K562 (cell line): ENCODE measurements at regions of chr7 and their contacts with region 1.

Region 1: GRCh38 chr7:30284298-30285066 is at the start of gene ZNRF2:
- DNase-seq: peak; percentile 97 to 99 (median 98)
- ATAC-seq: peak; percentile 90
- H3K4me3 ChIP-seq: peak within 1 kb of the TSS; percentile 94
- H3K27ac ChIP-seq: peak within 1 kb of the TSS; percentile 93
- H3K4me1 ChIP-seq: peaks cover 4 to 10% of the 10 kb centered on the region in 2 experiments; a peak in 4 of 5 replicates
- H3K27me3 ChIP-seq: no peaks in the 10 kb centered on the region
- CTCF ChIP-seq: peak; percentile 53 to 92 (median 63); a peak in 5 of 6 replicates
- EP300 ChIP-seq: no peak
- POLR2A ChIP-seq: peak; percentile 56
- RAD21 ChIP-seq: peak; percentile 54 to 56
- polyA plus RNA-seq, gene ZNRF2: 1.1 to 1.2 TPM

Region 2: DNA sequence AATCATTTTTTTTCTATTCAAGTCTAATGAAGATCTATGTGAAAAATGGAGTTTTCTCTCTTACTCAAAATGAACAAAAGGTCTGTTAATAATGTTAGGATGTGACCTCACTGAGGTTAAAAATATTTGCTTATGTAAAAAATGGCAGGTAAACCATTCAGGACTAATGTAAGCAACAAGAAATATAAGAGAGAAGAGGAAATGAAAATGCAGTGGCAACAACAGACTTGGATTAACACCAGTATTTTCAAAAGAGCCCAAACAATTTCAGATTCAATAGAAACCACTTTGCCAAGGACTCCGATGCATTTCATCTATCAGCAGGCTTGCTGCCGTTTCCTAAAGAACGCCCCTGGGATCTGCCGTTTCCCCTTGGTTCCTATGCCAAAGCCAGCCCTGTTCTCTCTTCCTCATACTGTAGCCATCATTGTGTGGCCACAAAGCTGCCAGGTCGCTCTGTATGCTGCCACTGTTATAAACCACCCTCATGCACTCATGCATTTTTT is 83.3 kb before region 1 on chr7:
- CTCF ChIA-PET with region 1: no interaction called
- POLR2A ChIA-PET with region 1: no interaction called
- in situ Hi-C with region 1: no loop called
- intact Hi-C with region 1: no loop called
- DNase-seq: no peak
- ATAC-seq: no peak
- H3K4me3 ChIP-seq: no peak overlapping the region
- H3K27ac ChIP-seq: no peak overlapping the region
- H3K4me1 ChIP-seq: no peaks in the 10 kb centered on the region
- H3K27me3 ChIP-seq: peaks cover 11% of the 10 kb centered on the region in 2 experiments
- CTCF ChIP-seq: no peak
- EP300 ChIP-seq: no peak
- POLR2A ChIP-seq: no peak
- RAD21 ChIP-seq: no peak

Region 3: GRCh38 chr7:30348083-30348560 is 63.6 kb after region 1 on chr7:
- CTCF ChIA-PET with region 1: interaction called, 3 read pairs
- POLR2A ChIA-PET with region 1: no interaction called
- in situ Hi-C with region 1: no loop called
- intact Hi-C with region 1: loop called (anchors 2 kb)
- DNase-seq: peak; percentile 10 to 77 (median 38)
- ATAC-seq: peak; percentile 84
- H3K4me3 ChIP-seq: no peak overlapping the region; the same call in 1 of the 2 replicates
- H3K27ac ChIP-seq: peak overlapping the region; percentile 80
- H3K4me1 ChIP-seq: peaks cover 0 to 48% of the 10 kb centered on the region in 2 experiments; a peak in 3 of 5 replicates
- H3K27me3 ChIP-seq: no peaks in the 10 kb centered on the region
- CTCF ChIP-seq: no peak
- EP300 ChIP-seq: peak; percentile 62
- POLR2A ChIP-seq: no peak
- RAD21 ChIP-seq: 0 out of 4 replicates have a peak, but pooled peaks of 1 of the 2 experiments have one; percentile 11

Region 4: GRCh38 chr7:30412810-30413504 is 128.5 kb after region 1 on chr7:
- CTCF ChIA-PET with region 1: interaction called, 8 read pairs
- POLR2A ChIA-PET with region 1: no interaction called
- in situ Hi-C with region 1: loop called (anchors 5 kb)
- intact Hi-C with region 1: loop called (anchors 2 kb)
- DNase-seq: peak; percentile 36 to 77 (median 54)
- ATAC-seq: peak; percentile 94
- H3K4me3 ChIP-seq: no peak overlapping the region
- H3K27ac ChIP-seq: no peak overlapping the region
- H3K4me1 ChIP-seq: no peaks in the 10 kb centered on the region; a peak in 1 of 5 replicates
- H3K27me3 ChIP-seq: no peaks in the 10 kb centered on the region
- CTCF ChIP-seq: peak; percentile 55 to 75 (median 75)
- EP300 ChIP-seq: no peak
- POLR2A ChIP-seq: no peak
- RAD21 ChIP-seq: peak; percentile 85 to 92

Region 5: GRCh38 chr7:30504347-30505173 is 220.1 kb after region 1 on chr7 and contains the start of gene GGCT:
- CTCF ChIA-PET with region 1: no interaction called
- POLR2A ChIA-PET with region 1: no interaction called
- in situ Hi-C with region 1: no loop called
- intact Hi-C with region 1: loop called (anchors 5 kb)
- DNase-seq: peak; percentile 99 to 100 (median 100)
- ATAC-seq: peak; percentile 98
- H3K4me3 ChIP-seq: peak within 1 kb of the TSS; percentile 82
- H3K27ac ChIP-seq: peak within 1 kb of the TSS; percentile 82
- H3K4me1 ChIP-seq: peaks cover 14 to 16% of the 10 kb centered on the region in 2 experiments; a peak in 4 of 5 replicates
- H3K27me3 ChIP-seq: no peaks in the 10 kb centered on the region
- CTCF ChIP-seq: 0 out of 6 replicates have a peak, but pooled peaks of 1 of the 3 experiments have one; percentile 4
- EP300 ChIP-seq: peak; percentile 23
- POLR2A ChIP-seq: peak; percentile 94
- RAD21 ChIP-seq: no peak
- polyA plus RNA-seq, gene GGCT: 285 to 349 TPM

Region 6: GRCh38 chr7:30771174-30771879 is 486.8 kb after region 1 on chr7 and contains the start of gene MINDY4:
- CTCF ChIA-PET with region 1: no interaction called
- POLR2A ChIA-PET with region 1: no interaction called
- in situ Hi-C with region 1: no loop called
- intact Hi-C with region 1: loop called (anchors 5 kb)
- DNase-seq: peak; percentile 92 to 96 (median 96)
- ATAC-seq: peak; percentile 97
- H3K4me3 ChIP-seq: peak within 1 kb of the TSS; percentile 71
- H3K27ac ChIP-seq: peak within 1 kb of the TSS; percentile 82
- H3K4me1 ChIP-seq: peaks cover 19 to 24% of the 10 kb centered on the region in 2 experiments
- H3K27me3 ChIP-seq: no peaks in the 10 kb centered on the region
- CTCF ChIP-seq: no peak
- EP300 ChIP-seq: no peak
- POLR2A ChIP-seq: peak; percentile 76
- RAD21 ChIP-seq: no peak
- polyA plus RNA-seq, gene MINDY4: 2.1 to 2.3 TPM